ENCODE measurements at regions of chr6 and their contacts with region 1.

Region 1: GRCh38 chr6:12450467-12450866 is 160.3 kb downstream of the EDN1 start:
- DNase-seq: no peak
- H3K4me3 Mint-ChIP-seq: no peak overlapping the region
- H3K27ac Mint-ChIP-seq: no peak overlapping the region
- H3K4me1 Mint-ChIP-seq: peaks cover 10% of the 10 kb centered on the region
- H3K27me3 Mint-ChIP-seq: no peaks in the 10 kb centered on the region
- CTCF ChIP-seq: no peak

Region 2: GRCh38 chr6:12483712-12484111 is 33.2 kb after region 1 on chr6:
- CTCF ChIA-PET with region 1: no interaction called
- intact Hi-C with region 1: loop called (anchors 1 kb)
- DNase-seq: peak; percentile 47
- H3K4me3 Mint-ChIP-seq: peak overlapping the region; percentile 26
- H3K27ac Mint-ChIP-seq: peak overlapping the region; percentile 61
- H3K4me1 Mint-ChIP-seq: peaks cover 46% of the 10 kb centered on the region
- H3K27me3 Mint-ChIP-seq: no peaks in the 10 kb centered on the region
- CTCF ChIP-seq: no peak

Region 3: GRCh38 chr6:12709116-12709515 is 258.6 kb after region 1 on chr6:
- CTCF ChIA-PET with region 1: no interaction called
- intact Hi-C with region 1: no loop called
- DNase-seq: no peak
- H3K4me3 Mint-ChIP-seq: no peak overlapping the region
- H3K27ac Mint-ChIP-seq: no peak overlapping the region
- H3K4me1 Mint-ChIP-seq: no peaks in the 10 kb centered on the region
- H3K27me3 Mint-ChIP-seq: peaks cover 97% of the 10 kb centered on the region
- CTCF ChIP-seq: no peak

Measured in Calu3 (cell line).